ENCODE measurements at regions of chr17 and their contacts with region 1.

Region 1: DNA sequence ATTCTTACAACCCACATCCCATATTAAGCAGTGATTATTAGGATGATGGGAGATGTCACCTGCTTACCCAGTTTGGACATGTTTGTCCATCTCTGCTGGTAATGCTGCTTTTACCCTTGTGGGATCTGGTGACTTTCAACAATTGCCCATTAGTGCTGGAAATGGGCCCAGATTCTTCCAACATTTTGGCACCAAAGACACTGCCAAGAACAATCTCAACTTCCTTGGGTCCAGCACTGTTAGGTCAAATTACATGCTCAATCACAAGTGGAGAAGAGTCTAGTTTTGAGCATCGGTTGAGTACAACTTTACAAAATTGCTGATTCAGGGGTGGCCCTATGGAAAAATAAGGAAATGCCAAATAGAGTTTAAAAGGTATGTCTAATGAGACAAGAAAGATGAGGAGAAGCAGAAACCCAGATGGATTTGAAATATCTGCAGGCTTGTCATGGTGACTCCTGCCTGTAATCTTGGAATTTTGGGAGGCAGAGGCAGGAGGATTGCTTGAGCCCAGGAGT is 13.0 kb upstream of the ZFP3 start:
- DNase-seq: no peak
- H3K4me3 ChIP-seq: no peak overlapping the region
- H3K27me3 ChIP-seq: peaks cover 6% of the 10 kb centered on the region; the same call in 1 of the 2 replicates
- CTCF ChIP-seq: no peak

Region 2: DNA sequence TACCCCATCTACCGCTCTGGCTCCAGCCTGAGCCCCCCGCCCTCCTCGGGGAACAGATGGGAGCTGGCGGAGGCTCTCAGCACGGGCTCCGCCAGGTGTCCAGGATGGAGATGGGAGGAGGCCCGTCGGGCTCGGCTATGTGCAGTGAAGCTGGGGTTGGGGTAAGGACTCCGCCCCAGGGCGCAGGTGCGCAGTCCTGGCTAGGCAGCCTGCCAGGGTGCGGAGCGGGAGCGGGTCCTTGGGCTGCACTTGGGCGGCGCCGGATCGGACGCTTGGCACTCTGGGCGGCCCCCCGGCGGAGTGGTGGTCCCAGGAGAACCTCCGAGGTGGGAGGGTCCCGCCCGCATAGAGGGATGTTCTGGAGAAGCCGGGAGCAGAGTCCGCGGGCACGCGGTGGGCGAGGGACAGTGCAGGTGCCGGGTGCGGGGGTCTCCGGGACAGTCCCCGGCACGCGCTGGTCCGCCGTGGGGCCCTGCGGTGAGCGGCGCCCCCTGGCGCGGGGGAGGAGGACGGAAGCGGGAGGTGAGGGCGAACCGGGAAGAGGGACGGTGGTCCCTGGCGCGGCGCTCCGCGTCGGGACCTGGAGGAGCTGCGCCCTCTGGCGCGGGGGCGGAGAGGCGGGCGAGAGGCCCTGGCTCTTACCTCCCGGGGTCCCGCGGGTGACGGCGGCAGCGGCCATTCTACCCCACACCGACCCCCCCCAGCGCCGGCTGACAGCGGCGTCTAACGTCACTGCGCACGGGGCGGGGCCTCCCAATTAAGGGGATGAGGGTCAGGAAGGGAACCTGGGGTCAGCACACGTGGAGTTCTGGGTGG is 78.1 kb before region 1 on chr17 and contains the start of gene CAMTA2:
- CTCF ChIA-PET with region 1: interaction called, 12 read pairs
- POLR2A ChIA-PET with region 1: no interaction called
- DNase-seq: no peak
- H3K4me3 ChIP-seq: peak within 1 kb of the TSS; percentile 60
- H3K27me3 ChIP-seq: no peaks in the 10 kb centered on the region
- CTCF ChIP-seq: peak; percentile 52
- polyA plus RNA-seq, gene CAMTA2: 40.6 and 65.6 TPM in 2 replicates

Region 3: GRCh38 chr17:5049314-5049895 is 15.9 kb before region 1 on chr17:
- CTCF ChIA-PET with region 1: interaction called, 12 read pairs
- POLR2A ChIA-PET with region 1: no interaction called
- DNase-seq: no peak
- H3K4me3 ChIP-seq: no peak overlapping the region
- H3K27me3 ChIP-seq: no peaks in the 10 kb centered on the region
- CTCF ChIP-seq: no peak